A673 (cell line): ENCODE measurements at regions of chr9 and their contacts with region 1.

Region 1: DNA sequence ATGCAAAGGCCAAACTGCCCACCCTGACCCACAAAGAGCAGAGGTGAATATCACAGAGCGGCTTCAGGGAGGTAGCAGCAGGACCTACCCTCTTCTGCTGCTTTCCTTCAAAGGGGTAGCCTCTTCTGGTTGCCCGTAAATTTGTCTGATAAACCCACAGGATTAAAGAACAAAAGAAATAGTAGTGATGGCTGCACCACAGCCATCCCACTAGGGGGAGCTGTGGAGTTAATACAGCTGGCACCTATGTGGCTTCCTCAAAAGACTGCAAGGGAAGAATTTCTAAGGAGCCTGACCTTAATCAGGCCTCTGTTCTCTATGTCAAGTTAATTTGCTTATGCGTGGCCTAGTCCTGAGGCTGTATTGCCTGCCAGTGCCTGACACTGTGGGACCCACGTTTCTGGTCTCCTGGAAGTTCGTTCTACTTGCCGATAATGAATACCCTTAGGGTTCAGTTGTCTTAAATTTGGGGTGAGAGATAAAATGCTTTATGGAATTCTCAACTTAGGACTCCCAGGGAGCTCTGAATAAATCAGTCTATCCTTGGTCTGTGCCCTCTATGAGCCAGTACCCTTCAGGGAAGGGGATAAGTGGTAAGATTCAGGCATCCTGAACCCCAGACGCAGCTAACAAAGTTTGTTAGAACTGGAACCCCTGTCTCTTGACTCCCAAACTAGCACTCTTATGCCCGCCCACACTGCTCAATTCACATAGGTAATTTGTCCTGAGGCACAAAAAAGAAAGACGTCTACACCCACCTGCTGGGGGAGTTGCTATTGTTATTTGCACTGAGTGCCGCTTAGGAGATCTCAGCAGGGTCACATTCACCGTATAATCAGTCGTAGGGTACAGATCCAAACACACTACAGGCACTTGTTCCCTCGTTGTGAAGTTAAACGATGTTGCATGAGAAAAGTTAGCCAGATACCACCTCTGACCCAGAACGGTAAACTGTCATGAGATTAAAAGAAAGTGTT is 77.1 kb downstream of the SUSD1 start:
- DNase-seq: peak; percentile 86
- H3K4me3 ChIP-seq: no peak overlapping the region
- H3K27ac ChIP-seq: no peak overlapping the region
- H3K4me1 ChIP-seq: peaks cover 4% of the 10 kb centered on the region
- H3K27me3 ChIP-seq: no peaks in the 10 kb centered on the region
- CTCF ChIP-seq: peak; percentile 93

Region 2: DNA sequence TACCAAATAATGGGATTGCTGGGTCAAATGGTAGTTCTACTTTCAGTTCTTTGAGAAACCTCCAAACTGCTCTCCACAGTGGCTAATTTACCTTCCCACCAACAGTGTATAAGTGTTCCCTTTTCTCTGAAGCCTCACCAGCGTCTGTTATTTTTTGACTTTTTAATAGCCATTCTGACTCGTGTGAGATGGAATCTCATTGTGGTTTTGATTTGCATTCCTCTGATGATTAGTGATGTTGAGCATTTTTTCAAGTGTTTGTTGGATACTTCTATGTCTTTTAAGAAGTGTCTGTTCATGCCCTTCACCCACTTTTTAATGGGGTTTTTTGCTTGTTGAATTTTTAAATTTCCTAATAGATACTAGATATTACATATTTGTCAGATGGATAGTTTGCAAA is 105.5 kb after region 1 on chr9:
- CTCF ChIA-PET with region 1: no interaction called
- POLR2A ChIA-PET with region 1: no interaction called
- intact Hi-C with region 1: no loop called
- DNase-seq: no peak
- H3K4me3 ChIP-seq: no peak overlapping the region
- H3K27ac ChIP-seq: no peak overlapping the region
- H3K4me1 ChIP-seq: no peaks in the 10 kb centered on the region
- H3K27me3 ChIP-seq: no peaks in the 10 kb centered on the region
- CTCF ChIP-seq: no peak

Region 3: DNA sequence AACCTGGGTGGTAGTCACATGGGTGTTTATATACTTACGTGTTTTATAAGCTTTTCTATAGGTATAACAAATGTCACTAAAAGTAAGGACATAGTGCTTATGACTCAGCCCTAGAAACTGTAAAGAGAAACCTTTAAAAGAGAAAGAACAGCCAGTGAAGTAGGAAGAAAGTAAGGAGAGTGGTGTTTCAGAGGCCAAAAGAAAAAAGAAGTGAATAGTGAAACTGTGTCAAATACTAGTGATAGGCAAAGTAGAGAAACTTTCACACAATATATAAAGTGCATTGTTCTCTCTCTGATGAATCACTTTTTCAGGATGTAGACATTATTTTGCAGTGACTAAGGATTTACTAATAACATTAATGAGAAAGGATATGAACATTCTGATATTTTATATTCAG is 151.3 kb after region 1 on chr9:
- CTCF ChIA-PET with region 1: no interaction called
- POLR2A ChIA-PET with region 1: no interaction called
- intact Hi-C with region 1: no loop called
- DNase-seq: no peak
- H3K4me3 ChIP-seq: no peak overlapping the region
- H3K27ac ChIP-seq: no peak overlapping the region
- H3K4me1 ChIP-seq: no peaks in the 10 kb centered on the region
- H3K27me3 ChIP-seq: no peaks in the 10 kb centered on the region
- CTCF ChIP-seq: no peak

Region 4: GRCh38 chr9:112361601-112362000 is 263.6 kb after region 1 on chr9:
- CTCF ChIA-PET with region 1: interaction called, 3 read pairs
- POLR2A ChIA-PET with region 1: no interaction called
- intact Hi-C with region 1: loop called (anchors 2 kb)
- DNase-seq: peak; percentile 70
- H3K4me3 ChIP-seq: no peak overlapping the region
- H3K27ac ChIP-seq: no peak overlapping the region
- H3K4me1 ChIP-seq: no peaks in the 10 kb centered on the region
- H3K27me3 ChIP-seq: no peaks in the 10 kb centered on the region
- CTCF ChIP-seq: peak; percentile 65

Region 5: DNA sequence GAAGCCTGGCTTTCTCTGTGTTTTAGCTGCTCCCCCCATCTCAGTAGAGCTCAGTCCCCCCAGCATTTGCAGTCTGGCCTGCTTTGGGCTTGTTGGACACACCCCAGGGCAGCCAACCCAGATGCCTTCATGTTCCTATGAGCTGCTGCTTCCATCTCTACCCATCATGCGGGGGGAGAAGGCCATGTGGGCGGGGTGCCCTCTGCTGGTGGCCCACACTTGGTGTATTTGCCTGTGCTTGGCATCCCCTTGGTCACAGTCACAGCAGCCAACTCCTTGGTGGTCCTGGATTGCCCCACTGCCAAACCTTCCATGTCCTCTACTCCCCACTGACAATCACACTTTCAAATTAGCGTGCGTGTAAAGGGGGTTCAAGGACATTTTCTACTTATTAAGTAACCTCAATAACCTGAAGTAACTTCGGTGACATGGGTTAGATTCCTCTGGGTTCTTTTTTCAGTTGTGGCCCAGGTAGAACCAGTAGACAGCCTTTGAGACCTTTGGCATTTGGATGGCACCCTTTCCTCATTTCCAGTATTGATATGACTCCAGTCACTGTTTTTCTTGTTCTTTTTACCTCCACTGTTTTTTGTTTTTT is 695.3 kb after region 1 on chr9:
- CTCF ChIA-PET with region 1: interaction called, 4 read pairs
- POLR2A ChIA-PET with region 1: no interaction called
- intact Hi-C with region 1: loop called (anchors 10 kb)
- DNase-seq: peak; percentile 78
- H3K4me3 ChIP-seq: no peak overlapping the region
- H3K27ac ChIP-seq: no peak overlapping the region
- H3K4me1 ChIP-seq: no peaks in the 10 kb centered on the region
- H3K27me3 ChIP-seq: no peaks in the 10 kb centered on the region
- CTCF ChIP-seq: peak; percentile 81

Region 6: GRCh38 chr9:112905084-112905483 is 807.1 kb after region 1 on chr9:
- CTCF ChIA-PET with region 1: no interaction called
- POLR2A ChIA-PET with region 1: no interaction called
- intact Hi-C with region 1: loop called (anchors 10 kb)
- DNase-seq: no peak
- H3K4me3 ChIP-seq: no peak overlapping the region
- H3K27ac ChIP-seq: no peak overlapping the region
- H3K4me1 ChIP-seq: no peaks in the 10 kb centered on the region
- H3K27me3 ChIP-seq: no peaks in the 10 kb centered on the region
- CTCF ChIP-seq: no peak